ENCODE measurements at regions of chr11 and their contacts with region 1.

Region 1: DNA sequence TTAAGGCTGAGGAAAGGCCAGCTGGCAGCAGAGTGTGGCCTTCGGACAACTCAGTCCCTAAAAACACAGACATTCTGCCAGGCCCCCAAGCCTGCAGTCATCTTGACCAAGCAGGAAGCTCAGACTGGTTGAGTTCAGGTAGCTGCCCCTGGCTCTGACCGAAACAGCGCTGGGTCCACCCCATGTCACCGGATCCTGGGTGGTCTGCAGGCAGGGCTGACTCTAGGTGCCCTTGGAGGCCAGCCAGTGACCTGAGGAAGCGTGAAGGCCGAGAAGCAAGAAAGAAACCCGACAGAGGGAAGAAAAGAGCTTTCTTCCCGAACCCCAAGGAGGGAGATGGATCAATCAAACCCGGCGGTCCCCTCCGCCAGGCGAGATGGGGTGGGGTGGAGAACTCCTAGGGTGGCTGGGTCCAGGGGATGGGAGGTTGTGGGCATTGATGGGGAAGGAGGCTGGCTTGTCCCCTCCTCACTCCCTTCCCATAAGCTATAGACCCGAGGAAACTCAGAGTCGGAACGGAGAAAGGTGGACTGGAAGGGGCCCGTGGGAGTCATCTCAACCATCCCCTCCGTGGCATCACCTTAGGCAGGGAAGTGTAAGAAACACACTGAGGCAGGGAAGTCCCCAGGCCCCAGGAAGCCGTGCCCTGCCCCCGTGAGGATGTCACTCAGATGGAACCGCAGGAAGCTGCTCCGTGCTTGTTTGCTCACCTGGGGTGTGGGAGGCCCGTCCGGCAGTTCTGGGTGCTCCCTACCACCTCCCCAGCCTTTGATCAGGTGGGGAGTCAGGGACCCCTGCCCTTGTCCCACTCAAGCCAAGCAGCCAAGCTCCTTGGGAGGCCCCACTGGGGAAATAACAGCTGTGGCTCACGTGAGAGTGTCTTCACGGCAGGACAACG is 11.7 kb downstream of the CXCR5 start:
- DNase-seq: peak; percentile 91
- H3K4me3 Mint-ChIP-seq: peak overlapping the region; percentile 83
- H3K27ac Mint-ChIP-seq: peak overlapping the region; percentile 83
- H3K4me1 Mint-ChIP-seq: peaks cover 60% of the 10 kb centered on the region
- H3K27me3 Mint-ChIP-seq: no peaks in the 10 kb centered on the region

Region 2: DNA sequence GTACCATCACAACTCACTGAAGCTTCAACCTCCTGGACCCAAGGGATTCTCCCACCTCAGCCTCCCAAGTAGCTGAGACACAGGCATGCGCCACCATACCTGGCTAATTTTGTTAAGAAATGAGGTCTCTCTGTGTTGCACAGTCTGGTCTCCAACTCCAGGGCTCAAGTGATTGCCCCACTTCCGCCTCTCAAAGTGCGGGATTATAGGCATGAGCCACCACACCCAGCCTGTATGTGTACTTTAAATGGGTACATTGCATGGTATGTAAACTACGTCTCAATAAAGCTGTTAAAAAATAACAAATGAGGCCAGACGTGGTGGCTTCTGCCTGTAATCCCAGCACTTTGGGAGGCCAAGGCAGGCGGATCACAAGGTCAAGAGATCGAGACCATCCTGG is 68.3 kb before region 1 on chr11:
- intact Hi-C with region 1: no loop called
- DNase-seq: no peak
- H3K4me3 Mint-ChIP-seq: no peak overlapping the region
- H3K27ac Mint-ChIP-seq: no peak overlapping the region
- H3K4me1 Mint-ChIP-seq: no peaks in the 10 kb centered on the region
- H3K27me3 Mint-ChIP-seq: no peaks in the 10 kb centered on the region

Region 3: GRCh38 chr11:118870396-118871345 is 24.7 kb before region 1 on chr11:
- intact Hi-C with region 1: loop called (anchors 1 kb)
- DNase-seq: peak; percentile 74
- H3K4me3 Mint-ChIP-seq: peak overlapping the region; percentile 74
- H3K27ac Mint-ChIP-seq: peak overlapping the region; percentile 98
- H3K4me1 Mint-ChIP-seq: peaks cover 42% of the 10 kb centered on the region
- H3K27me3 Mint-ChIP-seq: no peaks in the 10 kb centered on the region

Region 4: DNA sequence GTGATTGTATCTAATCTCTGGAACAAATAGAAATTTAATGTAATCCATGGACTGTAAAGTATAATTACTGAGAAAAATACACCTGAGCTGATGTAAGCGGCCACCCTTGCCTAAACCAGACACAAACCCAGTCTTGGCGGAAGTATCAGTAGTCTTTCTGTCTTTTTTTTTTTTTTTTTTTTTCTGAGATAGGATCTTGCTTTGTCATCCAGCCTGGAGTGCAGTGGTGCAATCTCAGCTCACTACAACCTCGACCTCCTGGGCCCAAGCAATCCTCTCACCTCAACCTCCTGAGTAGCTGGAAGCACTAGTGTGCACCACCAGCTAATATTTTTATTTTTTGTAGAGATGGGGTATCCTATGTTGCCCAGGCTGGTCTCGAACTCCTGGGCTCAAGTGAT is 17.2 kb before region 1 on chr11:
- intact Hi-C with region 1: loop called (anchors 1 kb)
- DNase-seq: peak; percentile 73
- H3K4me3 Mint-ChIP-seq: no peak overlapping the region
- H3K27ac Mint-ChIP-seq: peak overlapping the region; percentile 82
- H3K4me1 Mint-ChIP-seq: peaks cover 79% of the 10 kb centered on the region
- H3K27me3 Mint-ChIP-seq: no peaks in the 10 kb centered on the region

Region 5: GRCh38 chr11:118918128-118918685 is 22.8 kb after region 1 on chr11:
- intact Hi-C with region 1: no loop called
- DNase-seq: peak; percentile 79
- H3K4me3 Mint-ChIP-seq: peak overlapping the region; percentile 90
- H3K27ac Mint-ChIP-seq: peak overlapping the region; percentile 97
- H3K4me1 Mint-ChIP-seq: peaks cover 82% of the 10 kb centered on the region
- H3K27me3 Mint-ChIP-seq: no peaks in the 10 kb centered on the region

Measured in activated CD4-positive, alpha-beta T cell treated with anti-CD3 and anti-CD28 coated beads, Interleukin-2, amount 10 ng/mL, durations not matched to agents 24 days and 14 days (primary cell).